ENCODE measurements at regions of chr12 and their contacts with region 1.

Region 1: GRCh38 chr12:56062996-56063395 is 17.0 kb upstream of the ERBB3 start:
- DNase-seq: no peak
- ATAC-seq: no peak
- H3K4me3 ChIP-seq: no peak overlapping the region
- H3K27ac ChIP-seq: no peak overlapping the region
- H3K4me1 ChIP-seq: no peaks in the 10 kb centered on the region
- H3K27me3 ChIP-seq: no peaks in the 10 kb centered on the region
- CTCF ChIP-seq: no peak

Region 2: DNA sequence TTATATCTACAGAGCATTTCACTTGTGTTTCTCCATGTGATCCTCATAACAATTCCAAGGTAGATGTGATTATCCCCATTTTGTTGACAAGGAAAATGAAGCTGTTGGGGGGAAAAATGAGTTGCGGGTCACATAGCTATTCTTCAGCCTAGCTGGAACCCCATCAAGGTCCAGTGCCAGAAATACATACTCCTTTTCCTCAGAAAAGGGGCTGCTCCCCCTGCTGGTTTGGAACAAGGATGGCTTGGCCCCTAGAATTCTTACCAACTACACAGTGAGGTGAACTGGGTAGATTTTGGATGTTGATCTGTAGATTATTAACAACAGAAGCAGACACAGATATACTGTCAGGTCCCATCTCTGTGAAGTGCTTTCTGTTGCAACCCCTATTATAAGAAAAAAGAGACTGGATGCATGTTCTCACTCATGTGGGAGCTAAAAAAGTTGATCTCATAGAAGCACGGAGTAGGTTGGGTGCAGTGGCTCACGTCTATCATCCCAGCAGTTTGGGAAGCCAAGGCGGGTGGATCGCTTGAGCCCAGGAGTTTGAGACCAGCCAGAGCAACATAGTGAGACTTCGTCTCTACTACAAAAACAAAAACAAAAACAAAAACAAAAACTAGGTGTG is 33.2 kb before region 1 on chr12:
- intact Hi-C with region 1: loop called in 1 of 2 experiments (anchors 2 kb)
- DNase-seq: no peak
- ATAC-seq: peak in 1 of 4 donors; percentile 69
- H3K4me3 ChIP-seq: no peak overlapping the region
- H3K27ac ChIP-seq: no peak overlapping the region
- H3K4me1 ChIP-seq: no peaks in the 10 kb centered on the region
- H3K27me3 ChIP-seq: no peaks in the 10 kb centered on the region
- CTCF ChIP-seq: peak; percentile 50

Measured in psoas muscle (tissue), 8 donors.